Dorsolateral prefrontal cortex (tissue), 120 donors: ENCODE measurements at regions of chr9 and their contacts with region 1.

Region 1: GRCh38 chr9:2620919-2621679 is 488 bp upstream of the VLDLR start:
- DNase-seq: peak; percentile 56 to 89 (median 80)
- H3K4me3 ChIP-seq: peak overlapping the region; percentile 57 to 93 (median 80)
- H3K27ac ChIP-seq: peak overlapping the region in 58 of 59 donors; percentile 36 to 91 (median 80)
- H3K27me3 ChIP-seq: peaks cover 0 to 5% (median 0%) of the 10 kb centered on the region in 45 donors
- CTCF ChIP-seq: peak in 23 of 56 donors; percentile 3 to 44 (median 19)

Region 2: GRCh38 chr9:2014696-2015580 is 606.2 kb before region 1 on chr9 and contains the start of gene SMARCA2:
- intact Hi-C with region 1: loop called (anchors 5 kb)
- DNase-seq: peak; percentile 97 to 99 (median 98)
- H3K4me3 ChIP-seq: peak within 1 kb of the TSS; percentile 59 to 99 (median 90)
- H3K27ac ChIP-seq: peak within 1 kb of the TSS; percentile 89 to 99 (median 98)
- H3K27me3 ChIP-seq: no peaks in the 10 kb centered on the region
- CTCF ChIP-seq: peak in 23 of 56 donors; percentile 5 to 46 (median 18)
- total RNA-seq, gene SMARCA2: 186 to 408 (median 285) TPM

Region 3: GRCh38 chr9:2132484-2133082 is 488.5 kb before region 1 on chr9:
- intact Hi-C with region 1: loop called in 1 of 2 experiments (anchors 10 kb)
- DNase-seq: no peak
- H3K4me3 ChIP-seq: no peak overlapping the region
- H3K27ac ChIP-seq: no peak overlapping the region
- H3K27me3 ChIP-seq: no peaks in the 10 kb centered on the region
- CTCF ChIP-seq: peak; percentile 53 to 82 (median 71)

Region 4: GRCh38 chr9:2140600-2141223 is 480.4 kb before region 1 on chr9:
- intact Hi-C with region 1: loop called (anchors 5 to 10 kb)
- DNase-seq: no peak
- H3K4me3 ChIP-seq: no peak overlapping the region
- H3K27ac ChIP-seq: no peak overlapping the region
- H3K27me3 ChIP-seq: no peaks in the 10 kb centered on the region
- CTCF ChIP-seq: no peak

Region 5: DNA sequence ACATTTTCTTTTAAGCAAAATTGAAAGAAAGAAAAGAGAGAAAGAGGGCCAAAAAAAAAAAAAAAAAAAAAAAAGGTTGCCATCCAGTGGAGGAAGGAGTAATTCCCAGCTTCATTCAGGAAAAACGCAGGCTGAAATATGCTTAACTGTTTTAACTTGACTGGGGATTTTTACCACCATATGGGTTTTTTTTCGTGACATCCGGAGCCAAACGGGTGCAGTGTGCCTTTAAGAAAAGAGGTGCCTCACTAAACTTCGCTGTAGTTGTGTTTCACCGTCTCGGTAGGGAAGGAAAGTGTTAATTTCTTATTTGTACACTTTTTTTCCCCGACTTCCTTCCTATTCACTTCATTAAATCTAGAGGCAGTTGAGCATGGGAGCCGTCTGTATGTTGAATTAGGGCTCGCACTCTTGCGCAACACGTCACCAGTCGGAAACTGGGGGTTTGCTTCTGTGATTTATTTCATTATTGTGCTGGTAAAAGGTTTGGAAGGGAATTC is 462.9 kb before region 1 on chr9:
- intact Hi-C with region 1: loop called in 1 of 2 experiments (anchors 10 kb)
- DNase-seq: peak in 3 of 10 donors; percentile 12 to 40 (median 39)
- H3K4me3 ChIP-seq: peak overlapping the region; percentile 32 to 75 (median 59)
- H3K27ac ChIP-seq: peak overlapping the region in 53 of 59 donors; percentile 1 to 90 (median 79)
- H3K27me3 ChIP-seq: no peaks in the 10 kb centered on the region
- CTCF ChIP-seq: peak in 9 of 56 donors; percentile 7 to 21 (median 13)

Region 6: GRCh38 chr9:2241836-2242741 is 379.0 kb before region 1 on chr9:
- intact Hi-C with region 1: loop called (anchors 5 kb)
- DNase-seq: peak; percentile 77 to 93 (median 88)
- H3K4me3 ChIP-seq: peak overlapping the region; percentile 37 to 82 (median 65)
- H3K27ac ChIP-seq: peak overlapping the region; percentile 32 to 94 (median 87)
- H3K27me3 ChIP-seq: no peaks in the 10 kb centered on the region
- CTCF ChIP-seq: peak in 17 of 56 donors; percentile 2 to 48 (median 26)

Region 7: DNA sequence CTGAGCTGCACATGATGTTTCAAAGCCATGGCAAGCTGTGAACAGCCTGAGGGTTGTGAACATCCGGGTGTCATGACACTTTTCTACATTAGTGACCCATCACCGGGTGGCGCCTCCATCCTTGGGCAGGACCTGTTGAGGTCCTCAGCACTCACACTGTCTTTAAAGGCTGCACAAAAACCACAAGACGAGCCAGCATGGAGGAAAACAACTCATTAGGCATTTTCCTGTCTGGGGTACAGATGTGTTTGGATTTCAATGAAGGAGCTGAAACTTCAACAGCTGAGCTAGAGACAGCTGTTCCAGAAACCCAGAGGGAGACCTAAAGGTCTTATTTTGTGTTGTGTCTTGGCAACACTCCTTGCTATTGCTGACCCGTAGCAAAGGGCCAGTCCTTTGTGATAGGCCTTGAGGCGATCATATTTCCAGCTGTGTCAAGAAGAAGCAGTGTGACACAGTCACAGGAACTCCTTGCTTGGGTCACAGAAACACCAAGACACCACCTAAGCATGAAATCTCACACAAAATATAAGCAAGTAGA is 151.3 kb before region 1 on chr9:
- intact Hi-C with region 1: loop called in 1 of 2 experiments (anchors 10 kb)
- DNase-seq: no peak
- H3K4me3 ChIP-seq: no peak overlapping the region
- H3K27ac ChIP-seq: no peak overlapping the region
- H3K27me3 ChIP-seq: no peaks in the 10 kb centered on the region
- CTCF ChIP-seq: peak in 1 of 56 donors; percentile 8